GM13976 (cell line): ENCODE measurements at regions of chr12 and their contacts with region 1.

Region 1: DNA sequence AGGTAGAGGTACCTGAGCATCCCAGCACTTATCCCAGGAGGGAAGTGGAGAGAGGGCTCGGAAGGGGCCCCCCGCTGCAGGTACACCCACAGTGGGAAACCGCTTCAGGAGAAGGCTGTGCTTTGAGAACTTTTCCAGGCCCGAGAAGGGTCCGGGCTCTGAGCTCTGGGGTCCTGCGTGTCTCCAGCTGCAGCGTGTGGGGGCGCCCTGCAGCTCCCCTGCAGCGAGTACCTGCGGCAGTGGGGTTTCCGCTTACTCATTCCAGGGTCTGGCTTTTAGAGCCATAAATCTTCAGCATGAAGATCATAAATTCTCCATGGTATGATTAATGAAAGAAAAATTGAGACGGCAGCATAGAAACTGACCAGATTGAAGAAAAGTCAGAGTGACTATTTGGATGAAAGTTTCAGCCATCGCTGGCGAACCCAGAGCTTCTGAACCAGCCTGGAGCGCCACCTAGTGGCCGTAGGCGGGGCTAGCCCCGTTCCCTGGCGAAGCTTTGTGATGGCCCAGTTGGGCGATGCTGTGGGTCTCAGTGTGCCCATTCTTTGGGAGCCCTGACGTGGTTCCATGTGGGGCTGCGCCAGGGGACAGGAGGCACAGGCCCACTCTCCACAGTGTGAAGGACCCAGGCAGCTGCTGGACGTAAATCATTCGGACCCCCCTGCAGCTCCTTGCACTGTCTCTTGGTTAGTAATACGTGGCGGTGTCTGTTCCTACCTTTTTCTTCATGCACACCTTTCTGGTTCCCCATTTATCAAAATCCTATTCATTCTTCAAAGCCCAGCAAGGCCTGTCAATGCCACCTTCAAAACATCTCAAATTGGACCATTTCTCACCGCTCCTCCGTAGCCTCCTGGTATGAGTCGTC is 198.2 kb downstream of the TSPAN9 start:
- DNase-seq: peak; percentile 91
- CTCF ChIP-seq: peak; percentile 98

Region 2: DNA sequence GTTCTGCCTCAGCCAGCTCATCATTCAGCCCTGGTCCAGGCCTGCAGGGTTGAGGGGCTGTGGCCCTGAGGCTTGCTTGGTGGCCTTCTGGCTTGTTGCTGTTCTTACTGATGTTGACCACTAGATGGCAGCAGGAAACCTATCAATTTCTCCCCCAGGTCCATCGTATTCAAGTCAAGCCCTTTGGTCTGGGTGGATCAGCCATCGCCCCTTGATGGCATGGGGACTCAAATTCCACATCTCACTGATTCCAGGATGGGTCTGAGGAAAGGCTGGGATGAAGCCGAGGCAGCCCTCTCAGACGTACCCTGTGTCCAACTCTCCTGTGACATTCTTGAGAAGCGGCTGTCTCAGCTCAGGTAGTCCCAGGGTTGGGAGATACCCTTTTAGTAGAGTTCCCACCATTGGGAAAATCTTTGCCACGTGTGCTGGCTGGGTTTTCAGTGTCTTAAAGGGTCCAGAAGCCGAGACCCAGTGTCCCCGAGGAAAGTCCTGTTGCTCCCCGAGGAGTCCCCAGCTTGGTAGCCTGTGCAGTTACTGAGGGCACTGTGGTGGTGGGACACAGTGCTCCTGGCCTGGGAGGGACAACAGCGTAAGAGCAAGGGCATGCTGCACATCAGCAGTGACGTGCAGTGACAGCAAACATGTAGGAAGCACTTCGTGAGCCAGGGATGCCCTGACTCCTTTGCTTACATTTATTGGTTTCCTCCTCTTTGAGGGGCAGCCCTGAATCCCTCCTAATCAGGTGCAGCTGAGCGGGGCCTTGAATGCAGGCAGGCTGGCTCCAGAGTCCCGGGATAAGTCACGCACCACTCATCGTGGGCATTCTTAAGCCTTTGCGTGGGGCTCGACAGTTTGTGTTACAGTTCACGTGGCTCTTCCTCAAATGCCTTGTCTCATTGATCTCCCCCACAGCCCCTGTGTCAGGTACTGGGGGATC is 139.6 kb before region 1 on chr12:
- in situ Hi-C with region 1: loop called (anchors 10 kb)
- DNase-seq: peak; percentile 89
- CTCF ChIP-seq: peak; percentile 67

Region 3: GRCh38 chr12:3418609-3419390 is 143.4 kb after region 1 on chr12:
- in situ Hi-C with region 1: no loop called
- DNase-seq: no peak
- CTCF ChIP-seq: no peak

Region 4: GRCh38 chr12:3698218-3698974 is 423.0 kb after region 1 on chr12:
- in situ Hi-C with region 1: no loop called
- DNase-seq: no peak
- CTCF ChIP-seq: no peak